Dorsolateral prefrontal cortex (tissue), 120 donors: ENCODE measurements at regions of chr7 and their contacts with region 1.

Region 1: GRCh38 chr7:32204361-32205018 is 134.3 kb upstream of the PDE1C start:
- DNase-seq: peak; percentile 68 to 93 (median 88)
- H3K4me3 ChIP-seq: peak overlapping the region in 58 of 59 donors; percentile 14 to 68 (median 44)
- H3K27ac ChIP-seq: peak overlapping the region in 9 of 59 donors; percentile 5 to 70 (median 26)
- H3K27me3 ChIP-seq: peaks cover 0 to 9% (median 0%) of the 10 kb centered on the region in 45 donors
- CTCF ChIP-seq: peak; percentile 77 to 99 (median 97)

Region 2: GRCh38 chr7:31443457-31443856 is 761.0 kb before region 1 on chr7:
- intact Hi-C with region 1: loop called in 1 of 2 experiments (anchors 5 kb)
- DNase-seq: peak in 1 of 10 donors; percentile 18
- H3K4me3 ChIP-seq: no peak overlapping the region
- H3K27ac ChIP-seq: no peak overlapping the region
- H3K27me3 ChIP-seq: peaks cover 0 to 20% (median 0%) of the 10 kb centered on the region in 45 donors
- CTCF ChIP-seq: peak; percentile 70 to 93 (median 85)

Region 3: GRCh38 chr7:31744294-31744874 is 460.1 kb before region 1 on chr7:
- intact Hi-C with region 1: loop called (anchors 1 kb)
- DNase-seq: peak; percentile 67 to 91 (median 78)
- H3K4me3 ChIP-seq: no peak overlapping the region
- H3K27ac ChIP-seq: no peak overlapping the region
- H3K27me3 ChIP-seq: no peaks in the 10 kb centered on the region
- CTCF ChIP-seq: peak; percentile 71 to 99 (median 95)

Region 4: GRCh38 chr7:32070406-32071360 is 133.8 kb before region 1 on chr7 and contains the start of gene PDE1C:
- intact Hi-C with region 1: loop called (anchors 10 kb)
- DNase-seq: peak in 9 of 10 donors; percentile 18 to 80 (median 65)
- H3K4me3 ChIP-seq: peak within 1 kb of the TSS; percentile 45 to 84 (median 70)
- H3K27ac ChIP-seq: peak within 1 kb of the TSS; percentile 58 to 100 (median 96)
- H3K27me3 ChIP-seq: peaks cover 0 to 29% (median 0%) of the 10 kb centered on the region in 45 donors
- CTCF ChIP-seq: peak in 2 of 56 donors; percentile 6 to 11
- total RNA-seq, gene PDE1C: 32.4 to 247 (median 78.1) TPM

Region 5: DNA sequence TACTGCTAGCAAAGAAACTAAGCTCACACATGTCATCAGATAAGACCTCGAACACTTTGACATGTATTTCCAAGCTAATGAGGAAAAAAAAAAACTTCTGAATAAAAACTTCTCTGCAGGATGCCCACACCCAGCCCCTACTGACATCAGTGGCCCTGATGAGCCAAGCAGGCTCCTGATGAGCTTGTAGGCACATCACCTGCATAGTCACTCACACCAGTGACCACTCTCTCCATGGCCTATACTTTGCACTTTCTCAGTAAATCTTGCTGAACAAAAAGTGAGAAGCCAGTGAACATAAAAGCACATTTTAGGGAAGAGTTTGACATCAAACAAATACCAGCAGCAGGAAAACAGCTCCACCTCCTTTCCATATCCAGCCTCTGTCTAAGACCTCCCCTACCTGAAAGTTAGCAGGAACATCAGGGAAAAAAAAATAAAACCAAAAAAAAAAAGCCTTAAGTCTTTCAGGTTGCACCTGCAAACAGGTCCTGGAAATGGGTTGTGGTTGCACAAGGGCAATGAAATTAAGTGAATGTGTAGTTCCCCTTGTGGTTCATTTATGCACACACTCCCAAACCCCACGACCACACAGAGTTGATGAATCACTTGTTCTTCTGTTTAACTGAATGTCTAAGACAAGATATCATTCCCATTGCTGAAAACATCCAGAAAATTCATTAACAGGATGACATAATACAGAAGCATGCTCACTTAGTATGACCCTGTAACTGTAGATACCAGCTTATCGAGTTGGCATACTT is 70.9 kb after region 1 on chr7:
- intact Hi-C with region 1: no loop called
- DNase-seq: no peak
- H3K4me3 ChIP-seq: no peak overlapping the region
- H3K27ac ChIP-seq: no peak overlapping the region
- H3K27me3 ChIP-seq: peaks cover 0 to 56% (median 0%) of the 10 kb centered on the region in 45 donors
- CTCF ChIP-seq: no peak

Region 6: GRCh38 chr7:32357535-32358277 is 153.2 kb after region 1 on chr7:
- intact Hi-C with region 1: loop called in 1 of 2 experiments (anchors 5 kb)
- DNase-seq: no peak
- H3K4me3 ChIP-seq: no peak overlapping the region
- H3K27ac ChIP-seq: no peak overlapping the region
- H3K27me3 ChIP-seq: peaks cover 0 to 27% (median 1%) of the 10 kb centered on the region in 45 donors
- CTCF ChIP-seq: peak in 45 of 56 donors; percentile 11 to 65 (median 37)